Tibial artery (tissue), 4 donors: ENCODE measurements at regions of chr4 and their contacts with region 1.

Region 1: DNA sequence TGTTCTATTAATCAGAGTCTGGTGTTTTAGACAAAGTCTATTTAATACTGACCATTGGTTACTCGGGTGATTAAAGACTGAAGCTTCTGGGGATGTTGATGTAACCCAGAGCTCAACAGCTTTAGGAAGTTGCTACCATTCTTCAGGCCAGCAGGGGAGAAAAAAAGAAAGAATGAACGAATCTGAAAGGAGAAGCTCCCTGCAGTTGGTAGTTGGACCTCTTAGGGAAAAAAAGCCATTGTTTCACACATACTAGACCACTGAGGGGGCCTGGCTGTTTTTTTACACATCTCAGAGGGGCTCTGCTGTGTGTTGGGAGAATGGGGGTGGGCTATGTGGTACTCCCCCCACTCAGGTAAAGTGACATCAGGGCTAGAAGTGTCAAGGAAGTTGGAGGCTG is 378.9 kb downstream of the KCNIP4 start:
- DNase-seq: no peak
- H3K4me3 ChIP-seq: no peak overlapping the region
- H3K27ac ChIP-seq: no peak overlapping the region
- H3K4me1 ChIP-seq: no peaks in the 10 kb centered on the region
- H3K27me3 ChIP-seq: no peaks in the 10 kb centered on the region
- CTCF ChIP-seq: no peak

Region 2: DNA sequence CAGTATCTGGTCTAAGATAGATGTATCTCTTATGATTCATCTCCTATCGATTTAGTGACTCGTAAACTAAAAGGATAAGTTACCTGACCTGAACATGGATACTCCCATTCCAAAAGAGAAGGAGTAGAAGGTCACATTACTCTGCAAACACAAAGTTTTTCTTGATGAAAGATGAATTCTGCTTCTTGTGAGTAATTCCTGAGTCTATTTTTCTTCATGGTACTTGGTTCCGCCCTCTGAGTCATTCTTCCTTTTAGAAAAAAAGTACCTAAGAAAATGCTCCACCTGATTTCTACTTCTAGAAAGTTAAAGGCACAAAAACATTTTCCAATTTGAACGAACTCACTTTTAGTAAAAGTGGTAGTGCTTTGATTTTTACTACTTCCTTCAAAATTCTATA is 1540.9 kb before region 1 on chr4:
- intact Hi-C with region 1: loop called (anchors 5 kb)
- DNase-seq: no peak
- H3K4me3 ChIP-seq: no peak overlapping the region
- H3K27ac ChIP-seq: no peak overlapping the region
- H3K4me1 ChIP-seq: no peaks in the 10 kb centered on the region
- H3K27me3 ChIP-seq: no peaks in the 10 kb centered on the region
- CTCF ChIP-seq: no peak

Region 3: DNA sequence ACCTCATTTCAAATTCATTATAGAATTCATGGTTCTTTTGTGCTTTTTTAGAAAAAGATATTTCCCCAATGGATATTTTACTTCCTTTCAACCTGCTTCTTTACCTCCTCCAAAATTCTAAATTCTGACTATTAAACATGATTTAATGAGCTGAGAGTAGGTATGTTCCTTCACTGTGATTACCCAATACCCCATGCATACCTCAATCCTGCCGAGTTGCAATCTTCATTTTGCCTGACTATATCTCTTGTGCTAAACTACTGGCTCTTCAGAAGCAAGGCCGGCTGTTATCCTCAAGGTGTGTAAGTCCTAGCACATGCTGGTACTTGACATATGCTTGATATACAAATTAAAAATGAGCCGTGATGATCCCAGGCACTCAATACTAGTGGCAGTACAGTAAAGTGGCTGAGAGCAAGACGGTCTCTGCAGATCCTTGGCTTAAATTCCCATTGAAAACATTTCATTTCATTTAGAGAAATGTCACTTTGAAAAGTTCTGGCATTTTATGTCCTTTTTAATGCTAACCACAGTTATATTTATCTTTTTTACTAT is 58.6 kb after region 1 on chr4:
- intact Hi-C with region 1: loop called (anchors 2 kb)
- DNase-seq: no peak
- H3K4me3 ChIP-seq: no peak overlapping the region
- H3K27ac ChIP-seq: no peak overlapping the region
- H3K4me1 ChIP-seq: no peaks in the 10 kb centered on the region
- H3K27me3 ChIP-seq: no peaks in the 10 kb centered on the region
- CTCF ChIP-seq: no peak